Activated T-helper 2 cell treated with anti-CD3 and anti-CD28 coated beads, Interferon-gamma antibody, Interleukin-2, Interleukin-4, amounts not matched to agents 10 μg/mL and 5 μg/mL and 100 μg/mL, durations not matched to agents 14 hours and 24 hours and 36 hours (primary cell): ENCODE measurements at regions of chr1 and their contacts with region 1.

Region 1: GRCh38 chr1:37807555-37808368 is at the starts of genes C1orf122 and YRDC:
- DNase-seq: peak; percentile 89
- H3K4me3 Mint-ChIP-seq: peak within 1 kb of the TSS; percentile 94
- H3K27ac Mint-ChIP-seq: peak within 1 kb of the TSS; percentile 94
- H3K4me1 Mint-ChIP-seq: peaks cover 30% of the 10 kb centered on the region
- H3K27me3 Mint-ChIP-seq: no peaks in the 10 kb centered on the region
- total RNA-seq, gene C1orf122: 22.6 and 24.5 TPM in 2 replicates
- total RNA-seq, gene YRDC: 45.2 and 46.5 TPM in 2 replicates

Region 2: GRCh38 chr1:37338658-37339057 is 469.1 kb before region 1 on chr1:
- intact Hi-C with region 1: no loop called
- DNase-seq: no peak
- H3K4me3 Mint-ChIP-seq: no peak overlapping the region
- H3K27ac Mint-ChIP-seq: no peak overlapping the region
- H3K4me1 Mint-ChIP-seq: no peaks in the 10 kb centered on the region
- H3K27me3 Mint-ChIP-seq: no peaks in the 10 kb centered on the region

Region 3: GRCh38 chr1:37553927-37554808 is 253.6 kb before region 1 on chr1 and contains the start of gene SNIP1:
- intact Hi-C with region 1: loop called (anchors 5 kb)
- DNase-seq: peak; percentile 89
- H3K4me3 Mint-ChIP-seq: peak within 1 kb of the TSS; percentile 98
- H3K27ac Mint-ChIP-seq: peak within 1 kb of the TSS; percentile 93
- H3K4me1 Mint-ChIP-seq: peaks cover 41% of the 10 kb centered on the region
- H3K27me3 Mint-ChIP-seq: no peaks in the 10 kb centered on the region
- total RNA-seq, gene SNIP1: 26.1 and 27.8 TPM in 2 replicates

Region 4: DNA sequence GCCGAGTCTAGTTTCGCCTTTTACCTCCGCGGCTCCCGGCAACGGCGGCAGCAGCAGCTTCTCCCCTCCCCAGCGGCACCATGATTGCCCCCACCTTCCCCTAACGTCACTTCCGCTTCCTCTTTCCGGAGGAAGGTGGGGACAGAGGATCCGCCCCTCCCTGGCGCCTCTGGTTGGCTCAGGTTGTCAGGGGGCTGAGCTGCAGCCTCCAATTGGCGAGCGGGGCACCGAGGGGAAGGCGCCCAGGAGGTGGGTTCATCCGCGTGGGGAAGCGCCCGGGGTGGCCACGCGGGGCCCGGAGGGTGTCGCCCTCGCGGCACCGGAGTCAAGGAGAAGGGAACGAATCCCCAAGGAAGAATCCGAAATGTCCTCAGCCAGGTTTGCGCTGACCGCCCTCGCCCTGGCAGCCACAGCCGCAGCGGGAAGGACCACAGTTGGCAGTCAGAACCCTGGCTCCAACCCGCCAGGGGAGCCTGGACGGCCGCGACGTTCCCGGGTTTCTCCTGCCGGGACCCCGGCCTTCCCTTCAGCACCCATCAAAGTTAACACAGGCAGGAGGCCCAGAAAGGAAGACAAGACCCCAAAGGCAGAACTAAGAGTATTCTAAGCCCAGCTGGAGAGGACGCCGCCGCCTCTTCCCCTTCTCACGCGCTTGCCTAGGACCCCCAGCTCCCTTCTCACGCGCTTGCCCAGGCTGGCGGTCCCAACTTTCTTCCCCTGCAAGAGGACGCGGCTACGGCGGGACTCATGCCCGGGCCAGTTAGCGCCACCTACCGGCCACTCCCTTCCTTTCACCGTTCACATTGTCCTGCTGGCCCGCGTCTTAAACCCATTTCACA is 52.0 kb after region 1 on chr1 and contains the start of gene MTF1:
- intact Hi-C with region 1: loop called (anchors 1 kb)
- DNase-seq: peak; percentile 96
- H3K4me3 Mint-ChIP-seq: peak within 1 kb of the TSS; percentile 88
- H3K27ac Mint-ChIP-seq: peak within 1 kb of the TSS; percentile 89
- H3K4me1 Mint-ChIP-seq: peaks cover 26% of the 10 kb centered on the region
- H3K27me3 Mint-ChIP-seq: no peaks in the 10 kb centered on the region
- total RNA-seq, gene MTF1: 24.8 and 27.8 TPM in 2 replicates

Region 5: GRCh38 chr1:37989361-37989930 is 181.7 kb after region 1 on chr1:
- intact Hi-C with region 1: loop called (anchors 2 kb)
- DNase-seq: peak; percentile 48
- H3K4me3 Mint-ChIP-seq: peak overlapping the region; percentile 99
- H3K27ac Mint-ChIP-seq: peak overlapping the region; percentile 95
- H3K4me1 Mint-ChIP-seq: peaks cover 16% of the 10 kb centered on the region
- H3K27me3 Mint-ChIP-seq: no peaks in the 10 kb centered on the region

Region 6: GRCh38 chr1:38012363-38013226 is 204.8 kb after region 1 on chr1 and contains the start of gene UTP11:
- intact Hi-C with region 1: loop called (anchors 5 kb)
- DNase-seq: peak; percentile 90
- H3K4me3 Mint-ChIP-seq: peak within 1 kb of the TSS; percentile 95
- H3K27ac Mint-ChIP-seq: peak within 1 kb of the TSS; percentile 92
- H3K4me1 Mint-ChIP-seq: peaks cover 45% of the 10 kb centered on the region
- H3K27me3 Mint-ChIP-seq: no peaks in the 10 kb centered on the region
- total RNA-seq, gene UTP11: 78.8 and 79.0 TPM in 2 replicates